ENCODE measurements at regions of chr3 and their contacts with region 1.

Region 1: DNA sequence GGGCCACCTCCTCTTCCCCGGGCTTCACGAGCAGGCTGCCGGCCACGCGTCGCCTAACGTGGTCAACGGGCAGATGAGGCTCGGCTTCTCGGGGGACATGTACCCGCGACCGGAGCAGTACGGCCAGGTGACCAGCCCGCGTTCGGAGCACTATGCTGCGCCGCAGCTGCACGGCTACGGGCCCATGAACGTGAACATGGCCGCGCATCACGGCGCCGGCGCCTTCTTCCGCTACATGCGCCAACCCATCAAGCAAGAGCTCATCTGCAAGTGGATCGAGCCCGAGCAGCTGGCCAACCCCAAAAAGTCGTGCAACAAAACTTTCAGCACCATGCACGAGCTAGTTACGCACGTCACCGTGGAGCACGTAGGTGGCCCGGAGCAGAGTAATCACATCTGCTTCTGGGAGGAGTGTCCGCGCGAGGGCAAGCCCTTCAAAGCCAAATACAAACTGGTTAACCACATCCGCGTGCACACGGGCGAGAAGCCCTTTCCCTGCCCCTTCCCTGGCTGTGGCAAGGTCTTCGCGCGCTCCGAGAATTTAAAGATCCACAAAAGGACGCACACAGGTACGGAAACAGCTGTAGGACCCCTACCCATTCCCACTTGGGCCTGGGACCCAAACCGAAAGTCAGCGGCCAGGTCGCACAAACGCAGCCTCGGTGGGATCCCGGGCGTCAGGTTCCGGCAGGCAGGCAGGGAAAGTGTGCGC is 1.5 kb downstream of the ZIC1 start:
- DNase-seq: peak in 2 of 9 donors; percentile 10 to 17
- ATAC-seq: no peak
- H3K4me3 ChIP-seq: no peak overlapping the region
- H3K4me3 Mint-ChIP-seq: peak overlapping the region; percentile 34 to 80 (median 60)
- H3K27ac ChIP-seq: no peak overlapping the region
- H3K27ac Mint-ChIP-seq: peak overlapping the region in 1 of 9 donors; percentile 77
- H3K4me1 ChIP-seq: peaks cover 0 to 5% of the 10 kb centered on the region in 2 donors
- H3K4me1 Mint-ChIP-seq: peaks cover 14 to 57% (median 34%) of the 10 kb centered on the region in 7 donors
- H3K27me3 ChIP-seq: peaks cover 0 to 32% of the 10 kb centered on the region in 2 donors
- H3K27me3 Mint-ChIP-seq: peaks cover 77 to 86% (median 85%) of the 10 kb centered on the region in 5 donors

Region 2: GRCh38 chr3:147356909-147357900 is 53.5 kb before region 1 on chr3:
- CTCF ChIA-PET with region 1: no interaction called
- POLR2A ChIA-PET with region 1: no interaction called
- intact Hi-C with region 1: loop called in 1 of 2 experiments (anchors 5 kb)
- DNase-seq: no peak
- ATAC-seq: no peak
- H3K4me3 ChIP-seq: no peak overlapping the region
- H3K4me3 Mint-ChIP-seq: no peak overlapping the region
- H3K27ac ChIP-seq: no peak overlapping the region
- H3K27ac Mint-ChIP-seq: peak overlapping the region in 1 of 9 donors; percentile 77
- H3K4me1 ChIP-seq: no peaks in the 10 kb centered on the region
- H3K4me1 Mint-ChIP-seq: peaks cover 0 to 9% (median 2%) of the 10 kb centered on the region in 7 donors
- H3K27me3 ChIP-seq: peaks cover 0 to 18% of the 10 kb centered on the region in 2 donors
- H3K27me3 Mint-ChIP-seq: peaks cover 84 to 90% (median 89%) of the 10 kb centered on the region in 5 donors